ENCODE measurements at regions of chr13 and their contacts with region 1.

Region 1: DNA sequence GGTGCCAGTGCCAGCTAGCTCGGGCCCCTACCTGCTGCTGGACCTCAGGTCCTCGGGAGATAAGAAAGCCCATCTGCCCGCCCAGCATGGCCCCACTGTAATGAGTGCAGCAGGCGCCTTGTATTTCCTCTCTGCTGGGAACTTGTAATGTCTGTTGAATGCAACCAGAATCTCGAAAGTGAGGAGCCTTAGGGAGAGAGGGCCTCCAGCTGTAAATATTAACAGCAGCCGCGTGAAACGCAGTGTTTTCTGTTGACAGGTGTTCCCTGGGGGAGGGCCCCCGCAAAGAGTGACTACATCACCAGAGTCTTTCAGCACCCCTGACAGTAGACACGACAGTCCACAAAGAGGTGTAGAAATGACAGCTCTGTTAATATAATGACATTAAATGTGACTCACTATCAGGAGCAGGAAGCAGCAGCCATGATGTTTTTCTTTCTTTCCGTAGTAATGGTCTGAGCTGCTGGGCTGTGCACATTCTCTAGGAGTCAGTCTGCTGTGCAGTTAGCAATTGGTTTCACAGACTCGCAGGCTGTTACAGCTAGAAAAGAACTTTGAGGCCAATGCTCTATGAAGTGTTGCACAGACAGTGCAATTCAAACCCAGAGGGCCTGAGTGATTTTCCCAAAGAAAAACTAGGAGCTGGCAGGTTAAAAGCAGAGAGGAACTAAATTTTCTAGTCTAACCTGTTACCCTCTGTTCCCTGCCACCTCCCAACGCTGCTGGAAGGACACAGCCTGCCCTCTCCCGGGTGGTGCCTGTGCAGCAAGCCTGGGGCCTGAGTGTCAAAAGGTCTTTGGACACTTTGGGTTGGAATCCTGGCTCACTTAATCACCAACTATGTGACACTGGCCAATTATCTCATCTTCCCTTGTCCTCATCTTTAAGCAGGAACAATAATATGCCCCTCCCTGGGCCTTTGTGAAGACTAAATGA is 58.6 kb upstream of the WASF3 start:
- DNase-seq: no peak
- H3K4me3 ChIP-seq: no peak overlapping the region
- H3K27ac ChIP-seq: no peak overlapping the region
- H3K4me1 ChIP-seq: no peaks in the 10 kb centered on the region
- H3K27me3 ChIP-seq: no peaks in the 10 kb centered on the region
- CTCF ChIP-seq: no peak
- POLR2A ChIP-seq: no peak

Region 2: GRCh38 chr13:26186118-26186870 is 312.6 kb before region 1 on chr13:
- intact Hi-C with region 1: loop called (anchors 10 kb)
- DNase-seq: peak; percentile 94
- H3K4me3 ChIP-seq: peak overlapping the region; percentile 61 to 70
- H3K27ac ChIP-seq: peak overlapping the region; percentile 28 to 85
- H3K4me1 ChIP-seq: peaks cover 7% of the 10 kb centered on the region
- H3K27me3 ChIP-seq: no peaks in the 10 kb centered on the region
- CTCF ChIP-seq: peak in 2 of 3 experiments; percentile 16 to 40
- POLR2A ChIP-seq: no peak

Region 3: DNA sequence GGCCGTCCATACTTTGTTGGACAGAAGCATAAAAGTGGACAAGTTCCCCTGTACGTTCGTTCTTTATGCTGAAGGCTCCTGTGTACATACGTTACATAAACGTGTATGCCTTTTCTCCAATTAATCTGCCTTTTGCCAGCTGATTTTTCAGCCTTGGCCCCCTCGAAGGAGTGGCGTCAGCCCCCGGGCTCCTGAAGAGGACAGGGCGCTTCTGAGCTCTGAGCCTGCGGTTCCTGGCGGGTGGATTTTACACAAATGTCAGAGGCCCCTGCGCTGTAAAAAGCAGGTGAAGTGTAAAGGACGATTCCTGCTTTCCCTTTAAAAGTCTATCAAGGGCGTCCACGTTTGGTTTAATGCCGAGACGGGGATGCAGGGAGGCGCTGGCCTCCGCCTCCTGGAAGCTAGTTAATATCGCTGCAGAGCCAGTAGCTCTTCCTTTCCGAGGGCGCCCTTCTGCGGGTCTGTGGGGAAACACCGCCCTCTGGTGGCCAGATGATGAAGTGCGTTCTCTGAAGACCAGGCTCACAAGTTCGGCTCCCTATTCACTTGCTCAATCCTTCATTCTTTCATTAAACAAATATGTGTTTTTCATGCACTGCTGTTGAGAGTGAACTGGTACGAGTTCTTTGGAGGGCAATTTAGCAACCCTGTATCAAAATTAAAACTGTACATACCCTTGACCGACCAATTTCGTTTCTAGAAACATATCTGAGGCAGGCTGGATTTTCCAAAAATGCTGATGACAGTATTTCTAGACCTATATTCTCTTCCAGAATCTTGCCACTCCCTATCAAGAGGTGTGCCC is 199.7 kb after region 1 on chr13:
- intact Hi-C with region 1: loop called (anchors 5 kb)
- DNase-seq: peak; percentile 92
- H3K4me3 ChIP-seq: peak overlapping the region; percentile 19 to 46
- H3K27ac ChIP-seq: no peak overlapping the region
- H3K4me1 ChIP-seq: no peaks in the 10 kb centered on the region
- H3K27me3 ChIP-seq: no peaks in the 10 kb centered on the region
- CTCF ChIP-seq: peak; percentile 97 to 99 (median 98)
- POLR2A ChIP-seq: no peak

Measured in testis (tissue), 5 donors.